ENCODE measurements at regions of chr5 and their contacts with region 1.

Region 1: GRCh38 chr5:74640450-74640953 is at the start of gene ENC1:
- DNase-seq: peak; percentile 72
- CTCF ChIP-seq: peak; percentile 49

Region 2: GRCh38 chr5:74035521-74035981 is 605.0 kb before region 1 on chr5:
- in situ Hi-C with region 1: loop called (anchors 25 kb)
- DNase-seq: peak; percentile 21
- CTCF ChIP-seq: peak; percentile 50